CD8-positive, alpha-beta T cell (primary cell): ENCODE measurements at regions of chr6 and their contacts with region 1.

Region 1: GRCh38 chr6:163170294-163170883 is 244.1 kb upstream of the QKI start:
- DNase-seq: peak in 3 of 9 experiments; percentile 16 to 30 (median 19)
- ATAC-seq: peak; percentile 38
- H3K4me3 ChIP-seq: no peak overlapping the region
- H3K4me3 Mint-ChIP-seq: no peak overlapping the region
- H3K27ac ChIP-seq: no peak overlapping the region
- H3K27ac Mint-ChIP-seq: no peak overlapping the region
- H3K4me1 ChIP-seq: no peaks in the 10 kb centered on the region
- H3K4me1 Mint-ChIP-seq: no peaks in the 10 kb centered on the region
- H3K27me3 ChIP-seq: no peaks in the 10 kb centered on the region
- H3K27me3 Mint-ChIP-seq: no peaks in the 10 kb centered on the region
- CTCF ChIP-seq: peak; percentile 69

Region 2: GRCh38 chr6:163249651-163250101 is 79.3 kb after region 1 on chr6:
- CTCF ChIA-PET with region 1: no interaction called
- POLR2A ChIA-PET with region 1: no interaction called
- intact Hi-C with region 1: no loop called
- DNase-seq: no peak
- ATAC-seq: no peak
- H3K4me3 ChIP-seq: no peak overlapping the region
- H3K4me3 Mint-ChIP-seq: no peak overlapping the region
- H3K27ac ChIP-seq: no peak overlapping the region
- H3K27ac Mint-ChIP-seq: no peak overlapping the region
- H3K4me1 ChIP-seq: no peaks in the 10 kb centered on the region
- H3K4me1 Mint-ChIP-seq: peaks cover 5% of the 10 kb centered on the region
- H3K27me3 ChIP-seq: no peaks in the 10 kb centered on the region
- H3K27me3 Mint-ChIP-seq: peaks cover 24% of the 10 kb centered on the region
- CTCF ChIP-seq: no peak

Region 3: DNA sequence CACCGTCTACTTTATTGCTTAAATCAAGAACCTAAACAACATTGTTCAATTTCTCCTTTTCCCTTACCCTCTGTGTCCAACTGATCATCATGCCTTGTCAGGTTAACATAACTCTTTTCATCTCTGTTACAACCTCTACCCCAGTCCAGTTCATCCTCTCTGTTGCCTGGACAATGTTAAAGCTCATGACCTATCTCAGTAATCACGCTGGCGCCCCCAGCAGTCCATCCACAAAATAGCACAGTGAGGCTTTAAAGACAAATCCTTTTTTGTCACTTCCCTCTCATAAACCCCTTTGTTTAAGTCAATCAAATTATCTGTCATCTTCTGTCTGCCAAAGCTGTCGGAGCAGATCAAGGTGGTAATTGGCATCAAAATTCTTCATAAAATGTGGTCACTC is 384.3 kb after region 1 on chr6:
- CTCF ChIA-PET with region 1: interaction called, 5 read pairs
- POLR2A ChIA-PET with region 1: no interaction called
- intact Hi-C with region 1: loop called in 1 of 2 experiments (anchors 2 kb)
- DNase-seq: peak; percentile 26 to 66 (median 58)
- ATAC-seq: peak; percentile 69
- H3K4me3 ChIP-seq: no peak overlapping the region
- H3K4me3 Mint-ChIP-seq: no peak overlapping the region
- H3K27ac ChIP-seq: no peak overlapping the region
- H3K27ac Mint-ChIP-seq: no peak overlapping the region
- H3K4me1 ChIP-seq: no peaks in the 10 kb centered on the region
- H3K4me1 Mint-ChIP-seq: peaks cover 8% of the 10 kb centered on the region
- H3K27me3 ChIP-seq: no peaks in the 10 kb centered on the region
- H3K27me3 Mint-ChIP-seq: no peaks in the 10 kb centered on the region
- CTCF ChIP-seq: peak; percentile 75

Region 4: DNA sequence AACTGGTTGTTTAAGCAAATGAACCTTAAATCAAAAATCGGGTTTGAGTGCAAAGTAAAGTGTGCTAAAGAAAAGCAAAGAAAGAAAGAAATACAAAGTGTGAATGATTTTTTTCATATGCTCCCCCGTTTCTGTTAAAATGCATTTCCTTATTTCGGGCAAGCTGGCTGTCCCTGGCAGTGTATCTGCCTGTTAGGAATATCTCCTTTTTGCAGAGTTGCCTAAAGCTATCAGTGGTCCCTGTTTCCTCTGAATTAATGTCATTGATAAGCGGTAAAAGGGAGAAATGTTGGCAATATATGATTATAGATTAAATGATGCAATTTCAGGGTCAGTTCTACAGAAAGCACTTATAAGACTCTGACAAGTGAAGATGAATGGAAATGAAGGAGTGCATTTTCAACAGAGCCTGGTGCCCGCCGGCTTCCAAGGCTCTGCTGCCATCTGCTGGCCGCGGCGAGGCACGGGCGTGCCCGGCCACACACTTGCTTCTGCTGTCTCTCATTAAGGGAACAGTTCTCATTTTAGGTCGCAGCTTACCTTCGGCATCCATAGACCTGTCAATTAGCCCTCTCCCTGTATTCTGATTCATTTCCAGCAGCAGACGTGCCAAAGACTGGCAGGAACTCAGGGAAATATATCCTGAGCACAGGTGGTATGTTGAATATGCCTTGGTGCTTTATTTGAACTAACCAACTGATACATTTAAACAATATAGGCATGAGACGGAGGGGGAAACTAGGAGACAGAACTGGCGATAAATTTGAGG is 1757.1 kb after region 1 on chr6:
- CTCF ChIA-PET with region 1: no interaction called
- POLR2A ChIA-PET with region 1: no interaction called
- intact Hi-C with region 1: loop called in 1 of 2 experiments (anchors 5 kb)
- DNase-seq: peak in 8 of 9 experiments; percentile 28 to 68 (median 46)
- ATAC-seq: peak; percentile 40
- H3K4me3 ChIP-seq: no peak overlapping the region
- H3K4me3 Mint-ChIP-seq: no peak overlapping the region
- H3K27ac ChIP-seq: no peak overlapping the region
- H3K27ac Mint-ChIP-seq: no peak overlapping the region
- H3K4me1 ChIP-seq: no peaks in the 10 kb centered on the region
- H3K4me1 Mint-ChIP-seq: no peaks in the 10 kb centered on the region
- H3K27me3 ChIP-seq: peaks cover 0 to 2% of the 10 kb centered on the region in 2 experiments
- H3K27me3 Mint-ChIP-seq: no peaks in the 10 kb centered on the region
- CTCF ChIP-seq: peak; percentile 93